ENCODE measurements at regions of chr13 and their contacts with region 1.

Region 1: GRCh38 chr13:75749407-75749806 is 113.3 kb downstream of the LMO7 start:
- DNase-seq: no peak
- CTCF ChIP-seq: no peak

Region 2: GRCh38 chr13:75468098-75468497 is 281.3 kb before region 1 on chr13:
- CTCF ChIA-PET with region 1: no interaction called
- POLR2A ChIA-PET with region 1: no interaction called
- DNase-seq: no peak
- CTCF ChIP-seq: no peak

Region 3: GRCh38 chr13:75739244-75739868 is 10.1 kb before region 1 on chr13:
- CTCF ChIA-PET with region 1: interaction called, 13 read pairs
- POLR2A ChIA-PET with region 1: no interaction called
- DNase-seq: no peak
- CTCF ChIP-seq: no peak

Region 4: DNA sequence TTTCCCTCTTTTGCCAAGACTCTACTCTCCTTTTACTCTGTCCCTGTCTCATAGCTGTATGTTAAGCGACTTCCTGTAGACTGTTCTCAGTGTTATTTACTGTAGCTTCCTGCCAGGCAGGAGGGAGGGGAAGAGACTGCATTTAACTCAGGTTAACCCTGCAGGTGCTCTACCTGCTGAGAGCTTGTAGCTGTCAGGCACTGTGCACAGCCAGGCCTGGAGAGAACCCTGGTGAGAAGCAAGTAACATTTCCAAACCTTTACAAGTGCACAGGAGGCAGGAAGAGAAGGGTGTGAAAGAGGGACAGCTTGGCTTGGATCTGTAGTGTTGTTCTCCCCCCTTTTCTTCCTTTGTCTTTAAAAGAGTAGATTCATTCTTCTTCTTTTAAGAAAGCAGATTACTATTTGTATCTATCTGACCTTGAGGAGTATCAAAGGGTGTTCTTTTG is 53.8 kb after region 1 on chr13:
- CTCF ChIA-PET with region 1: no interaction called
- POLR2A ChIA-PET with region 1: no interaction called
- DNase-seq: peak; percentile 13
- CTCF ChIP-seq: no peak

Measured in GM10248 (cell line).